ENCODE measurements at regions of chr15 and their contacts with region 1.

Region 1: DNA sequence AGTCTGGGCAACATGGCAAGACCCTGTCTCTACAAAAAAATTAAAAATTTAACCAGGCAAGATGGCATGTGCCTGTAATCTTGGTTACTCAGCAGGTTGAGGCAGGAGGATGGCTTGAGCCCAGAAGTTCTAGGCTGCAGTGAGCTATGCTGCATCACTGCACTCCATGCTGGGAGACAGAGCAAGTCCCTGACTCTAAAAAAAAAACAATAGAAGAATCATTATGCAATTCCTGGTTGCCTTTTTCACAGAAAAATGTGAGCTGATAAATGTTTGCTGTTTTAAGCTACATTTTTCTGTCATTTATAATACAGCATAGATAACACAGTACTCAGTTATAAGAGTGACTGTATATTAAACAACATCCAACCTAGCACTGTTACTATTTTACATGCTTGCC is 148.8 kb downstream of the SCAPER start:
- DNase-seq: no peak
- ATAC-seq: no peak
- H3K4me3 Mint-ChIP-seq: no peak overlapping the region
- H3K27ac Mint-ChIP-seq: no peak overlapping the region
- H3K4me1 Mint-ChIP-seq: peaks cover 14% of the 10 kb centered on the region
- H3K27me3 Mint-ChIP-seq: no peaks in the 10 kb centered on the region

Region 2: GRCh38 chr15:76575274-76575673 is 181.1 kb before region 1 on chr15:
- CTCF ChIA-PET with region 1: no interaction called
- POLR2A ChIA-PET with region 1: no interaction called
- intact Hi-C with region 1: loop called in 1 of 2 experiments (anchors 1 kb)
- DNase-seq: no peak
- ATAC-seq: peak; percentile 75
- H3K4me3 Mint-ChIP-seq: no peak overlapping the region
- H3K27ac Mint-ChIP-seq: no peak overlapping the region
- H3K4me1 Mint-ChIP-seq: peaks cover 25% of the 10 kb centered on the region
- H3K27me3 Mint-ChIP-seq: no peaks in the 10 kb centered on the region

Region 3: GRCh38 chr15:76648732-76649444 is 107.5 kb before region 1 on chr15:
- CTCF ChIA-PET with region 1: no interaction called
- POLR2A ChIA-PET with region 1: no interaction called
- intact Hi-C with region 1: loop called (anchors 1 to 10 kb)
- DNase-seq: no peak
- ATAC-seq: no peak
- H3K4me3 Mint-ChIP-seq: no peak overlapping the region
- H3K27ac Mint-ChIP-seq: no peak overlapping the region
- H3K4me1 Mint-ChIP-seq: peaks cover 7% of the 10 kb centered on the region
- H3K27me3 Mint-ChIP-seq: no peaks in the 10 kb centered on the region

Region 4: GRCh38 chr15:76663529-76663928 is 92.9 kb before region 1 on chr15:
- CTCF ChIA-PET with region 1: no interaction called
- POLR2A ChIA-PET with region 1: no interaction called
- intact Hi-C with region 1: loop called in 1 of 2 experiments (anchors 10 kb)
- DNase-seq: no peak
- ATAC-seq: no peak
- H3K4me3 Mint-ChIP-seq: no peak overlapping the region
- H3K27ac Mint-ChIP-seq: no peak overlapping the region
- H3K4me1 Mint-ChIP-seq: peaks cover 7% of the 10 kb centered on the region
- H3K27me3 Mint-ChIP-seq: no peaks in the 10 kb centered on the region

Region 5: GRCh38 chr15:76696871-76697270 is 59.5 kb before region 1 on chr15:
- CTCF ChIA-PET with region 1: no interaction called
- POLR2A ChIA-PET with region 1: no interaction called
- intact Hi-C with region 1: no loop called
- DNase-seq: no peak
- ATAC-seq: no peak
- H3K4me3 Mint-ChIP-seq: no peak overlapping the region
- H3K27ac Mint-ChIP-seq: no peak overlapping the region
- H3K4me1 Mint-ChIP-seq: no peaks in the 10 kb centered on the region
- H3K27me3 Mint-ChIP-seq: no peaks in the 10 kb centered on the region

Region 6: GRCh38 chr15:76929011-76929760 is 172.8 kb after region 1 on chr15:
- CTCF ChIA-PET with region 1: no interaction called
- POLR2A ChIA-PET with region 1: no interaction called
- intact Hi-C with region 1: no loop called
- DNase-seq: no peak
- ATAC-seq: no peak
- H3K4me3 Mint-ChIP-seq: no peak overlapping the region
- H3K27ac Mint-ChIP-seq: no peak overlapping the region
- H3K4me1 Mint-ChIP-seq: peaks cover 21% of the 10 kb centered on the region
- H3K27me3 Mint-ChIP-seq: no peaks in the 10 kb centered on the region

Measured in activated CD4-positive, alpha-beta T cell treated with anti-CD3 and anti-CD28 coated beads for 36 hours (primary cell).